Ascending aorta (tissue), 2 donors: ENCODE measurements at regions of chr3 and their contacts with region 1.

Region 1: DNA sequence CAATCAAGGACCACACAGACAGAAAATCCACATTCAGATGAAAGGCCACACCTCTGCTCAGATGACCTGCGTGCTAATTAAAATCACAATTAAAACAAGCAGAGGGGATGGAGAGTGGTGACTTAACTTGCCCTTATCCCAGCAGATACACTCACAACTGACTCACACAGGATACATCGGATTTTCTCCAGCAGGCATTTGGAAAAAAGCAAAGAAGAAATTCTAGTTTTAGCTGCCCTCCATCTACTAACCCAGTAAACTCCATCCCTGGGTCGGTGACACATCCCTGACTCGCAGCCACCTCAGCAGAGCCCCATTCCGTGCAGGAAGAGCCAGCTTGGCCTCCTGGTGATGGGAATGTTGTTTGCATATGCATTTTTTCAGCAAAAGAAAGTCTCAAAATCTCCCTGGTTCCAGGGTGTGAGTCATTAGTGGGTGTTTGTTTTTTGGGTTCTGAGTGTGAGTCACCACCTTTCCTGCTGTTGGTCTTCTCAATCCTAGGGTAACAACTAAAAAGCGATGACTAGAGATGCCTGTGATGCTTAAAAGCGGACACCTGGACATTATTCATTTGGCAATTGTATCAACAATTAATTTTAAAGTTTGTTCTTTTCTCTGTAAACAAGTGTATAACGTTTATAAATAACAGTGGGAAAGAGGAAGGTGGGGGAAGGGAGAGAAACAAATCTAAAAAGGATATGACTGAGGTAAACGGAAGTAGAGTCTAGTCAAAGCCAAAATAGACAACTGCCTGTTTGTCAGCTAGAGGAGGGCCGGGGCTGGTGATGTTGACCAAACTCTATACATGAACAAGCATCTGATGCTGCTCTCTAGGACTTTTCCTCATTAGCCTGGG is 49.8 kb upstream of the SLC4A7 start:
- DNase-seq: peak; percentile 68 to 95
- H3K4me3 ChIP-seq: no peak overlapping the region
- H3K27ac ChIP-seq: peak overlapping the region; percentile 83 to 86
- H3K4me1 ChIP-seq: peaks cover 0 to 26% of the 10 kb centered on the region in 2 donors
- H3K27me3 ChIP-seq: no peaks in the 10 kb centered on the region
- CTCF ChIP-seq: peak; percentile 46 to 68 (median 48)

Region 2: GRCh38 chr3:27556887-27557286 is 22.9 kb after region 1 on chr3:
- intact Hi-C with region 1: loop called (anchors 1 kb)
- DNase-seq: no peak
- H3K4me3 ChIP-seq: no peak overlapping the region
- H3K27ac ChIP-seq: peak overlapping the region; percentile 84 to 87
- H3K4me1 ChIP-seq: peaks cover 4 to 28% of the 10 kb centered on the region in 2 donors
- H3K27me3 ChIP-seq: no peaks in the 10 kb centered on the region
- CTCF ChIP-seq: no peak

Region 3: DNA sequence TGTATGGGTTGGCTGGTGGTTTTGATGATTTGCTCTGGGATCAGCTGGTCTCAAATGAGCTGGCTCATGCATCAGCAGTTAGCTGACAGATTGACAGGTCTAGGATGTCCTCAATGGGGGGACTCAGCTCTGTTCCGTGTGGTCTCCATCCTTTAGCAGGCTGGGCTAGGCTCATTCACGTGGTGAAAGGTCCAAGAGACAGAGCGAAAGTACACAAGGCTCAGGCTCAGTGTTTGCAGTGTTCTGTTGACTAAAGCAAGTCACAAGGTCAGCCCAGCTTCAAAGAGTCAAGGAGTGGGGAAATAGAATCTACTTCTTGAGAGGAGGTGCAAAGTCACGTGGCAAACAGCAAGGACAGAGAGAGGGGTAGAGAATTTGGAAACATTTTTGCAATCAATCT is 580.9 kb after region 1 on chr3:
- intact Hi-C with region 1: no loop called
- DNase-seq: no peak
- H3K4me3 ChIP-seq: no peak overlapping the region
- H3K27ac ChIP-seq: no peak overlapping the region
- H3K4me1 ChIP-seq: no peaks in the 10 kb centered on the region
- H3K27me3 ChIP-seq: no peaks in the 10 kb centered on the region
- CTCF ChIP-seq: no peak